IMR-90 (cell line): ENCODE measurements at regions of chr13 and their contacts with region 1.

Region 1: DNA sequence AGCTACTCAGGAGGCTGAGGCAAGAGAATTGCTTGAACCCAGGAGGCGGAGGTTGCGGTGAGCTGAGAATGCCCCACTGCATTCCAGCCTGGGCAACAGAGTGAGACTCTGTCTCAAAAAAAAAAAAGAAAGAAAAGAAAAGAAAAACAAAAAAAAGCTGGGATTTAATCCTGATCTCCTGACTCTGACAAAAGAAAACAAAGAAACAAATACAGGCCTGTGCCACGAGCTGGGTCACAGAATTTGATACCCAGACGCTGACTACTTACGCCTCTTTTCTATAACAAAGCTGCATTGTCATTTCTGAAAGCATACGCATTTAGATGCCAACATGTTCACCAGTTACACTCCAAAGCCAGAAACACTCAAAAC is 18.2 kb upstream of the GTF2F2 start:
- DNase-seq: no peak
- ATAC-seq: no peak
- H3K4me3 ChIP-seq: no peak overlapping the region
- H3K27ac ChIP-seq: peak overlapping the region; percentile 88; the same call in 1 of the 2 replicates
- H3K4me1 ChIP-seq: peaks cover 22% of the 10 kb centered on the region
- H3K27me3 ChIP-seq: no peaks in the 10 kb centered on the region
- CTCF ChIP-seq: no peak
- POLR2A ChIP-seq: no peak
- RAD21 ChIP-seq: no peak

Region 2: DNA sequence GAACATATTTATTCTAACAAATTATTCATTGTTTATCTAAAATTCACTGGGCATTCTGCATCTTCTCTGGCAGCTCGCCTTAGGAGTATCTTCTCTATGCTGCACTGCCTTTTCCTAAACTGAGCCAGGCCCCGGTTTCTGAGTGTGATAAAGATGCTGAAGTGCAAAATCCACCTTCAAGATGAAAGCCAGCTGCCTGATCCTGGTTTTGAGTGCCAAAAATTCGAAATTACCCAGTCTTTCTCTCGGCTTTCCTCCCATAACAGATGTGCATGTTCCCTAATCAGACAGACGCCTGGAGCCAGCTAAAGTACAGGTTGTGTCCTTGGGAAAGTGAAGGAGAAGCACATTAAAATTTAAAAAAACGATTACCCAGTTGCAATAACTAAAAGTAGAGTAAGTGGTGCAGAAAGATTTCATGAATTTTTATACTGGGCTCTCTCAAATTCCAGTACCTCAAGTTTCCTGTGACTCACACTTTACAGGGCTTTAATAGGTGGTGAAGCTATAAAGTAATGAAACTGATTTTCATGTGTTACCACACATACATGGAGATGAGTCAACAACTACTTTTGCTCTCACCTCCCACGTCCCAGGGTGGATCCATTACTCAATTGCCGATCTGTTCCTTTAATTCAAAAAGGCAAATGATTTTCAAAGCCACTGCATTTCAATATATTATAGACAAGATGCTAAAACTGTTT is 46.8 kb before region 1 on chr13:
- CTCF ChIA-PET with region 1: interaction called, 8 read pairs
- POLR2A ChIA-PET with region 1: no interaction called
- dilution Hi-C with region 1: no loop called
- in situ Hi-C with region 1: no loop called
- intact Hi-C with region 1: loop called (anchors 1 kb)
- DNase-seq: peak; percentile 93
- ATAC-seq: peak; percentile 87
- H3K4me3 ChIP-seq: no peak overlapping the region
- H3K27ac ChIP-seq: peak overlapping the region; percentile 85
- H3K4me1 ChIP-seq: peaks cover 14% of the 10 kb centered on the region
- H3K27me3 ChIP-seq: no peaks in the 10 kb centered on the region
- CTCF ChIP-seq: no peak
- POLR2A ChIP-seq: no peak
- RAD21 ChIP-seq: no peak